ENCODE measurements at regions of chr15 and their contacts with region 1.

Region 1: DNA sequence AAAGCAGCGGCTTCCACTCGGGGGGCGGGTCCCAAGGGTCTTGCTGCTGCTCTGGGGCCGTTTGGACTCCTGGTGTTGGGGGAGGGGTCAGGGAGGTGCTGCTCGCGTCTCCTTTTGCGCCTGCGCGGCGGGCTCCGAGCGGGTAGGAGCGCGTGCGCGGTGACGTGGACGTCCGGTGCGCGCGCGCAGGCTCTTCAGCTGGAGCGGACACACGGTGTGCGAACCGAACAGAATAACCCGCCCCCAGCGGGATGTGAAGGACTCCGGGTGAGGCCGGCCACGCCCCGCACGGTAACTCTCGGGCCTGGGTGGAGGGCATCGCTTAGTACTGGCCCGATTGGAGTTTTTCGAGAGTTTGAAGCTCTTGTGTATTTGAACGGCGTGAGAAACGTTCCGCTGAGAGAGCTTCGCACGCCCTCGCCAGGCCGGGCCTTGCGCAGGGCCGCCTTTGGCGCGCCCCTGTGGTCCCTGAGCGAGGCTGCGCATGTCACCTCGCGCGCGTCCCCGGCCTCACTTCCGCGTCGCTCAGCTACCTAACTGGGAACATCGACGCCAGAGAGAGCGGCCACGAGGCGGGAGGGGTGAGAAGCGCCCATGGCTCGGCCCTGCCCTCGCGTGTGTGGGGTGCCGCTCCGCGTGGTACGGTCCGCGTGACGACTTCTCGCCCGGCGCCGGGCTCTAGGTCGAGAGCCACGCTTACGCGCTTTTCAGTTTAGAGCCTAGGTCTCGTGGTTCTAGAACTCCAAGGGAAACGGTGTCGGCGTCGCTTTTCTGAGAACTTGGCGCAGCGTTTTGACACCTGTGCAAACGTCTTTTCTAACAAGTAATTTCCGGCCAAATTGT is at the start of gene MGA:
- DNase-seq: peak; percentile 97
- H3K4me3 Mint-ChIP-seq: peak within 1 kb of the TSS; percentile 88
- H3K27ac Mint-ChIP-seq: peak within 1 kb of the TSS; percentile 89
- H3K4me1 Mint-ChIP-seq: peaks cover 30% of the 10 kb centered on the region
- H3K27me3 Mint-ChIP-seq: peaks cover 18% of the 10 kb centered on the region
- total RNA-seq, gene MGA: 36.0 and 37.7 TPM in 2 replicates

Region 2: GRCh38 chr15:41603941-41604911 is 56.2 kb before region 1 on chr15:
- intact Hi-C with region 1: loop called (anchors 5 kb)
- DNase-seq: peak; percentile 86
- H3K4me3 Mint-ChIP-seq: peak overlapping the region; percentile 61
- H3K27ac Mint-ChIP-seq: no peak overlapping the region
- H3K4me1 Mint-ChIP-seq: peaks cover 11% of the 10 kb centered on the region
- H3K27me3 Mint-ChIP-seq: peaks cover 34% of the 10 kb centered on the region

Region 3: DNA sequence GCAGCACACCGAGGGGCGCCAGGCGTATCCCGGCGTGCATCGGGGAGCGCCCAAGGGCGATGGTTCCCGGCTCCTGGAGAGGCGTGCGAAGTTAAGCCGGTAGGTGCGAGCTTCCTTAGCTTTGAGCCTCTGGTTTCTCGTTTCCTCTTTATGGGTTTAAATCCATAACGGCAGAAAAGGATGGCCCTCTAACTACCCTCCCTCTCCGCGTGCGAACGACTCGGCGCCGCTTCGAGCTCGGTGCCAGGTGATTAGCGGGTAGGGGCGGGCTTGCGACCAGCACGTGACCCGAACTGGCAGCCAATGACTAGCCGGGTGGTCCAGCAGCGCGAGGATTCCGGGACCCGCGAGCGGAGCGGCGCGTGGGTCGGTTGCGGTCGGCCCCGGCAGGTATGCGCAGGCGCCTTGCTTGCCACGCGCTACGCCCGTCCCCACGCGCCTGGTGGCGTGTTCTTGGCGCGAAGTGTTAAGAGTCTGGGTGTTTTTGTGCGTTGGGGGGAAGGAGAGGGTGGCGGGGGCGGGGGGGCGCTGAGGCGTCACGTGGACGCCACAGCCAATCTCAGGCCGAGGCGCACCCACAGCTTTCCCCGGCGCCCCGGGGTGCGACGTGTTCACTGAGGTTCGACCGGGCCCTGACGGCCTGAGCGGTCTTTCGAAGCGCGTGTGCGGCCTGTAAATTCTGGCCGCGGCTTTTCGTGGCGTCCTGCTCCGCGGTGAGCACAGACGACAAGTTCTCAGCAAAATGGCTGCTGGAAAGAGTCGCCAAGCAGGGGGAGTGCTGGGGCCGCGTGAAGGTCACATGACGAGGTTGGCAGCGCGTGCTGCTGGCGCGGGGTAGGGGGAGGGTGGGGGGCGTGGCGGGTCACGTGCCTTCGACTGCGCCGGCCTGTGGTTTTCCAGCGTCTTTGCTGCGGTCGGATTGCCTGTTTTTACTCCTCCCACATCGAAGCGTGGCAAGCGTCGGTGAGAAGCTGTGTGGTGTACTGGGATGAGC is 39.0 kb before region 1 on chr15:
- intact Hi-C with region 1: loop called (anchors 1 kb)
- DNase-seq: peak; percentile 92
- H3K4me3 Mint-ChIP-seq: peak overlapping the region; percentile 84
- H3K27ac Mint-ChIP-seq: peak overlapping the region; percentile 88
- H3K4me1 Mint-ChIP-seq: peaks cover 13% of the 10 kb centered on the region
- H3K27me3 Mint-ChIP-seq: peaks cover 17% of the 10 kb centered on the region

Region 4: DNA sequence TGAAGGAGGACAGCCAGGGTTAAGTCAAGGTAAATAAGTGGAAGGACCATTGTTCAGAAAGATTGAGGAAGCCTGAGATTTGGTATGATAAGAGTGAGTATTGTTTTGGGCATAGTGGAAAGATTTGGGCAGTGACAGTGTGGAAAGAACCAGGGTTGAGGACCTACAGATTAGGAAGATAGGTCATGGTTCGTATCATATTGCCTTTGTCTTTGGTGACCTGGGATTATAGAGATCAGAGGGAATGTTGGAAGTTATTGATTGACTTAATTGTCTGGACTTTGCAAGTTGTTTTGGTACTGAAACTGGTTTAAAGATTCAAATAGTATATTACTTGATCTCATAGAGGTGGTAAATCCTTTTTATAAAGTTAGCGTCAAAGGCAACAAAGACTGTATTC is 23.4 kb before region 1 on chr15:
- intact Hi-C with region 1: no loop called
- DNase-seq: no peak
- H3K4me3 Mint-ChIP-seq: no peak overlapping the region
- H3K27ac Mint-ChIP-seq: no peak overlapping the region
- H3K4me1 Mint-ChIP-seq: peaks cover 7% of the 10 kb centered on the region
- H3K27me3 Mint-ChIP-seq: no peaks in the 10 kb centered on the region